ENCODE measurements at regions of chr2 and their contacts with region 1.

Region 1: GRCh38 chr2:196431957-196432356 is 207.6 kb upstream of the CCDC150 start:
- DNase-seq: peak; percentile 20
- ATAC-seq: no peak
- H3K4me3 ChIP-seq: no peak overlapping the region
- H3K27ac ChIP-seq: no peak overlapping the region
- H3K4me1 ChIP-seq: no peaks in the 10 kb centered on the region
- H3K27me3 ChIP-seq: no peaks in the 10 kb centered on the region
- CTCF ChIP-seq: peak; percentile 31
- POLR2A ChIP-seq: no peak
- RAD21 ChIP-seq: 0 out of 2 replicates have a peak, but pooled peaks have one; percentile 13

Region 2: DNA sequence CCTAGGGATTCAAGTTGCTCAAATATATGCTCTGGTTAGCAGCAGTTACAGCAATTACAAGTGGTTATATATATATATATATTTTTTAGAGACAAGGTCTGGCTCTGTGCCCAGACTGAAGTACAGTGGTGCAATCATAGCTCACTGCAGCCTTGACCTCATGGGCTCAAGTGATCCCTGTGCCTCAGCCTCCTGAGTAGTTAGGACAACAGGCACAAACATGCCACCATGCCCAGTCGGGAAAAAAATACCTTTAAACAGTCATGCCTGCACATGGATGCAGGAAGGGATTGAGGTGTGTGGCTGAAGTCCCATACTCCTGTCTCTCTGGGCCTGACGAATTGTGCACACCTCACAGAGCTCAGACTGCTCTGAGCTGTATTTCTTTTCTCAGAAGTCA is 343.8 kb before region 1 on chr2:
- CTCF ChIA-PET with region 1: no interaction called
- POLR2A ChIA-PET with region 1: no interaction called
- dilution Hi-C with region 1: no loop called
- in situ Hi-C with region 1: loop called (anchors 25 kb)
- intact Hi-C with region 1: no loop called
- DNase-seq: peak; percentile 45
- ATAC-seq: peak; percentile 57
- H3K4me3 ChIP-seq: no peak overlapping the region
- H3K27ac ChIP-seq: no peak overlapping the region
- H3K4me1 ChIP-seq: no peaks in the 10 kb centered on the region
- H3K27me3 ChIP-seq: no peaks in the 10 kb centered on the region
- CTCF ChIP-seq: no peak
- POLR2A ChIP-seq: no peak
- RAD21 ChIP-seq: no peak

Region 3: DNA sequence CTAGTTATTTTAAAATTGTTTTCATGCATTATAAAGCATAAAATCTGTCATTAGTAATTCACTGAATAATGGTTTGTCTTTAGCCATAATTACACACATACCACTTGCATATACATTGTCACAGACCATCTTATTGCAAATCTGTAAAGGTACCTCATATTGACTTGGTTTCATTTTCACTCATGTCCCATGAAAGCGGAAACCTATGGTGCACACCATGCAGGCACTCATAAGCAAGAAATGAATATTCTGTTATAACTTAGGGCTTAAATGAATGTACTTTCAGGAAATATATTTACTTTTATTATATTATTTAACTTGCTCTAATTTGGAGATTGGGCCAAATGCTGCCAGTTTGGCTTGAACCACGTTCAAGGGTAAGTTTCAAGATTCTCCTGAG is 231.4 kb before region 1 on chr2:
- CTCF ChIA-PET with region 1: no interaction called
- POLR2A ChIA-PET with region 1: no interaction called
- dilution Hi-C with region 1: no loop called
- in situ Hi-C with region 1: no loop called
- intact Hi-C with region 1: no loop called
- DNase-seq: no peak
- ATAC-seq: no peak
- H3K4me3 ChIP-seq: no peak overlapping the region
- H3K27ac ChIP-seq: no peak overlapping the region
- H3K4me1 ChIP-seq: no peaks in the 10 kb centered on the region
- H3K27me3 ChIP-seq: no peaks in the 10 kb centered on the region
- CTCF ChIP-seq: no peak
- POLR2A ChIP-seq: no peak
- RAD21 ChIP-seq: no peak

Region 4: GRCh38 chr2:196551028-196551427 is 119.1 kb after region 1 on chr2:
- CTCF ChIA-PET with region 1: no interaction called
- POLR2A ChIA-PET with region 1: no interaction called
- dilution Hi-C with region 1: no loop called
- in situ Hi-C with region 1: no loop called
- intact Hi-C with region 1: no loop called
- DNase-seq: no peak
- ATAC-seq: no peak
- H3K4me3 ChIP-seq: no peak overlapping the region
- H3K27ac ChIP-seq: no peak overlapping the region
- H3K4me1 ChIP-seq: no peaks in the 10 kb centered on the region
- H3K27me3 ChIP-seq: no peaks in the 10 kb centered on the region
- CTCF ChIP-seq: no peak
- POLR2A ChIP-seq: no peak
- RAD21 ChIP-seq: no peak

Measured in IMR-90 (cell line).